Activated naive CD4-positive, alpha-beta T cell treated with anti-CD3 and anti-CD28 coated beads for 36 hours (primary cell): ENCODE measurements at regions of chr19 and their contacts with region 1.

Region 1: GRCh38 chr19:12965017-12965811 is 4.2 kb upstream of the DAND5 start:
- DNase-seq: peak; percentile 92
- H3K4me3 Mint-ChIP-seq: peak overlapping the region; percentile 93
- H3K27ac Mint-ChIP-seq: peak overlapping the region; percentile 88
- H3K4me1 Mint-ChIP-seq: peaks cover 11% of the 10 kb centered on the region
- H3K27me3 Mint-ChIP-seq: no peaks in the 10 kb centered on the region

Region 2: GRCh38 chr19:12847159-12848139 is 117.8 kb before region 1 on chr19:
- CTCF ChIA-PET with region 1: interaction called, 11 read pairs
- intact Hi-C with region 1: no loop called
- DNase-seq: peak; percentile 87
- H3K4me3 Mint-ChIP-seq: peak overlapping the region; percentile 36
- H3K27ac Mint-ChIP-seq: no peak overlapping the region
- H3K4me1 Mint-ChIP-seq: peaks cover 3% of the 10 kb centered on the region
- H3K27me3 Mint-ChIP-seq: peaks cover 21% of the 10 kb centered on the region

Region 3: DNA sequence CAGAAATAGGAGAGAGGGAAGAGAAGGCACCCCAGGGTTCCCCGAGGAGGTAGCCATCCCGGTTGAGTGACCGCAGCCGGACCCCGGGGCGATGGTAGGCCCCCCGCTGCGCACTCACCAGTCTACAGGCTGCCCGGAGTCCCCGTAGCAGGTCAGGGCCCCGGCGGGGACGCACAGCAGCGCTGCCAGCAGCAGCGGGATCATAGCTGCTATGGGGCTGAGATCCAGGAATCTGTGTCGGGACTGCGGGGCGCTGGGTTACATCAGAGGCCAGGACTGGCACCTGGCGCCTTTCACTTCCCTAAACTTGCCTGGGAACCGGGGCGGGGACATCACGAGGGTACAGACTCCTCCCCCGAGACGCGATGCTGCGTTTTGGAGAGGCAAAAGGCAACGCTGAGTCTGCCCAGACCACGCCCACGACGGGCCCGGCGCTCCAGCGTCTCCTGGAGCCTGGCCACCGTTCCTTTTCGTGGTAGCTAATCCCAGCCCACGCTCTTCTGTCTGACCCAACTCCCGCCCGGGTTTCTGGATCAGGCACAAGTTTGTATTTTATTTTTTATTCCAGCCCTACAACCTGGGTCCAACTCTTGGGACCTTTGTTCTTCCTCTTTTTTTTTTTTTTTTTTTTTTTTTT is 83.9 kb before region 1 on chr19 and contains the start of gene DNASE2:
- CTCF ChIA-PET with region 1: interaction called, 42 read pairs
- intact Hi-C with region 1: loop called (anchors 1 kb)
- DNase-seq: peak; percentile 97
- H3K4me3 Mint-ChIP-seq: peak within 1 kb of the TSS; percentile 88
- H3K27ac Mint-ChIP-seq: peak within 1 kb of the TSS; percentile 76
- H3K4me1 Mint-ChIP-seq: peaks cover 28% of the 10 kb centered on the region
- H3K27me3 Mint-ChIP-seq: no peaks in the 10 kb centered on the region
- total RNA-seq, gene DNASE2: 30.9 to 31.6 TPM

Region 4: DNA sequence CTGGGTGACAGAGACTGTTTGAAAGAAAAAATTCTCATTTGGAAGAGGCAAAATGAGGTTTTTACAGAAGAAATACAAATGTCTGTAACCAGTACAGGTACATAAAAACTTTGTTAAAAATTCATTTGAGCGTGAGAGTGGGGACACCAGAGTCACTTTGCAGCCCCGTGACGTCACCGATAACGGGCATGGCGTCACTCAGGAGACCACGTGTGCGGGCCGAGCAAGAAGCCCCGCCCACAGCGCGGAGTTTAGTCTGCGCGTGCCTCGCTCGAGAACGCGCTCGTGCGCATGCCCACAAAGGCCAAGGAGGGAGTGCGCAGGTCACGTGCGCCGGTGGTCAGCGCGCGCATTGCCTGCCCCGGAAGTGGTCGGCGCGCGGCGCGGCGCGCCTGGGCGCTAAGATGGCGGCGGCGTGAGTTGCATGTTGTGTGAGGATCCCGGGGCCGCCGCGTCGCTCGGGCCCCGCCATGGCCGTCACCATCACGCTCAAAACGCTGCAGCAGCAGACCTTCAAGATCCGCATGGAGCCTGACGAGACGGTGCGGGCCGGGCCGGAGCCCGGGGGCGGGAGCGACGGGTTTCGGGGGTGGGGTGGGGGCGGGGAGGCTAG is 19.6 kb before region 1 on chr19 and contains the start of gene RAD23A:
- CTCF ChIA-PET with region 1: interaction called, 17 read pairs
- intact Hi-C with region 1: no loop called
- DNase-seq: peak; percentile 98
- H3K4me3 Mint-ChIP-seq: peak within 1 kb of the TSS; percentile 90
- H3K27ac Mint-ChIP-seq: peak within 1 kb of the TSS; percentile 97
- H3K4me1 Mint-ChIP-seq: peaks cover 57% of the 10 kb centered on the region
- H3K27me3 Mint-ChIP-seq: no peaks in the 10 kb centered on the region
- total RNA-seq, gene RAD23A: 219 to 223 TPM

Region 5: DNA sequence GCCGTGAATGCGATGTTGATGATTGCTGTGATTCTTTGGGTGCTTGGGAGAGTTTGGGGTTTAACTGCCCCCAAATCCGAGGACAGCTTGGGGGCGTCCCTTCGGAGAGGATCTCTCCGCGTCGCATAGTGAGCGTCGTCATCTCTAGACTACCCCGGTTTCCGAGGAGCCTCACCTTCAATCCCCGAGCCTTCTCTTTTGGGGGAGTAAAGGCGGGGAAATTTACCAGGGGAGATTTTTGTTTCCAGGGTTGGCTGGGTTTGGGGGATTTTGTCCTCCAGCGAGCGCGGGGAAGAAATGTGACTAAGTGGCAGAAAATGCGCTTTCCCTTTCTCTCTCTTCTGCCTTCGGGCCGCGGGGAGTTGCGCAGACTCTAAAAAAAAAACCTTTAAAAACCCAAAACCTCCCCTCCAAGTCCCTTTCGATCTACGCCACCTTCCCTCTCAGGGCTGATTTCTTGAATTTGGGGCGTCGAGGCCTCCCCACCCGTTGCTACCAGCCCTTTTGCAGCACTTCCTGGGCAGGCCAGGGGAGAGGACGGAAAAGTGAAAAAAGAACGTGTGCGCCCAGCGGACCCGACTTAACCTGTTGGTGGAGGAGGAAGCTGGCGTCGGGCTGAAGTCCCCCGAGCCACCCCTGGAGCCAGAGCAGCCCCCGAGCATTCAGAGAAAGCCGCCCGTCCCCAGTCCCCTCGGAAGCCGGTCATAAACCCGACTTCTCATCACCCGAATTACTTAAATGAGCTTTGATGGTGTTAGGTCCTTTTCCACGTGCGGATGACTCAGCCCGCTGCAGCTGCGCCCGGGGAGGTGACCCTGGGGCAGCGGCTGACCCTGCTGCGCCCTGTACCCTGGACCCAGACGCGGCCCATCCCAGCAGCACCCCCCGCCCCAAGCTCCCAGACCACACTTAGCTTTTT is 47.7 kb after region 1 on chr19:
- CTCF ChIA-PET with region 1: interaction called, 19 read pairs
- intact Hi-C with region 1: no loop called
- DNase-seq: peak; percentile 83
- H3K4me3 Mint-ChIP-seq: peak overlapping the region; percentile 73
- H3K27ac Mint-ChIP-seq: peak overlapping the region; percentile 83
- H3K4me1 Mint-ChIP-seq: peaks cover 22% of the 10 kb centered on the region
- H3K27me3 Mint-ChIP-seq: peaks cover 40% of the 10 kb centered on the region

Region 6: GRCh38 chr19:13060964-13061927 is 96.0 kb after region 1 on chr19:
- CTCF ChIA-PET with region 1: interaction called, 94 read pairs
- intact Hi-C with region 1: loop called (anchors 1 kb)
- DNase-seq: peak; percentile 87
- H3K4me3 Mint-ChIP-seq: peak overlapping the region; percentile 71
- H3K27ac Mint-ChIP-seq: no peak overlapping the region
- H3K4me1 Mint-ChIP-seq: peaks cover 9% of the 10 kb centered on the region
- H3K27me3 Mint-ChIP-seq: peaks cover 4% of the 10 kb centered on the region

Region 7: GRCh38 chr19:13104360-13104847 is 139.2 kb after region 1 on chr19:
- CTCF ChIA-PET with region 1: interaction called, 19 read pairs
- intact Hi-C with region 1: no loop called
- DNase-seq: peak; percentile 72
- H3K4me3 Mint-ChIP-seq: peak overlapping the region; percentile 84
- H3K27ac Mint-ChIP-seq: peak overlapping the region; percentile 91
- H3K4me1 Mint-ChIP-seq: peaks cover 33% of the 10 kb centered on the region
- H3K27me3 Mint-ChIP-seq: no peaks in the 10 kb centered on the region

Region 8: GRCh38 chr19:13681509-13681908 is 716.3 kb after region 1 on chr19:
- CTCF ChIA-PET with region 1: no interaction called
- intact Hi-C with region 1: no loop called
- DNase-seq: no peak
- H3K4me3 Mint-ChIP-seq: no peak overlapping the region
- H3K27ac Mint-ChIP-seq: no peak overlapping the region
- H3K4me1 Mint-ChIP-seq: no peaks in the 10 kb centered on the region
- H3K27me3 Mint-ChIP-seq: peaks cover 13% of the 10 kb centered on the region